Sigmoid colon (tissue), 7 donors: ENCODE measurements at regions of chrX and their contacts with region 1.

Region 1: GRCh38 chrX:24014388-24015018 is 12.5 kb downstream of the KLHL15 start:
- DNase-seq: no peak
- H3K4me3 ChIP-seq: no peak overlapping the region
- H3K27ac ChIP-seq: peak overlapping the region in 3 of 4 donors; percentile 8 to 45 (median 8)
- H3K4me1 ChIP-seq: peaks cover 0 to 1% (median 0%) of the 10 kb centered on the region in 4 donors
- H3K27me3 ChIP-seq: no peaks in the 10 kb centered on the region
- CTCF ChIP-seq: no peak
- EP300 ChIP-seq: no peak
- POLR2A ChIP-seq: no peak

Region 2: DNA sequence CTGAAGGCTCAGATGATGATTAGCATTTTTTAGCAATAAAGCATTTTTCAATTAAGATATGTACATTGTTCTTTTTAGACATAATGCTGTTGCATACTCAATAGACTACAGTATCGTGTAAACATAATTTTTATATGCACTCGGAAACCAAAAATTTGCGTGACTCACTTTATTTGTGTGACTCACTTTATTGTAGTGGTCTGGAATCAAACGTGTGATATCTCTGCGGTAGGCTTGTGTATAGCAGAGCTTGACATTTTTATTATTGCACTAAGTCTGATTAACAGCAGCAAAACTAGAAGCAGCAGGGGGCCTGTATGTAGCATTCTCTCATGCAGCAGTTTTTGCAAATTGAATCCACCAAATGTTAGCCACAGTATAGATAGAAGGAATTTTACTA is 466.3 kb before region 1 on chrX:
- intact Hi-C with region 1: no loop called
- DNase-seq: no peak
- H3K4me3 ChIP-seq: no peak overlapping the region
- H3K27ac ChIP-seq: no peak overlapping the region
- H3K4me1 ChIP-seq: no peaks in the 10 kb centered on the region
- H3K27me3 ChIP-seq: no peaks in the 10 kb centered on the region
- CTCF ChIP-seq: no peak
- EP300 ChIP-seq: no peak
- POLR2A ChIP-seq: no peak

Region 3: GRCh38 chrX:23952984-23953907 is 61.3 kb before region 1 on chrX:
- intact Hi-C with region 1: loop called (anchors 10 kb)
- DNase-seq: no peak
- H3K4me3 ChIP-seq: no peak overlapping the region
- H3K27ac ChIP-seq: no peak overlapping the region
- H3K4me1 ChIP-seq: no peaks in the 10 kb centered on the region
- H3K27me3 ChIP-seq: no peaks in the 10 kb centered on the region
- CTCF ChIP-seq: no peak
- EP300 ChIP-seq: no peak
- POLR2A ChIP-seq: no peak

Region 4: GRCh38 chrX:23980011-23980441 is 34.5 kb before region 1 on chrX:
- intact Hi-C with region 1: no loop called
- DNase-seq: no peak
- H3K4me3 ChIP-seq: no peak overlapping the region
- H3K27ac ChIP-seq: no peak overlapping the region
- H3K4me1 ChIP-seq: peaks cover 0 to 4% (median 0%) of the 10 kb centered on the region in 4 donors
- H3K27me3 ChIP-seq: no peaks in the 10 kb centered on the region
- CTCF ChIP-seq: no peak
- EP300 ChIP-seq: no peak
- POLR2A ChIP-seq: no peak

Region 5: GRCh38 chrX:24110069-24110468 is 95.6 kb after region 1 on chrX:
- intact Hi-C with region 1: no loop called
- DNase-seq: no peak
- H3K4me3 ChIP-seq: no peak overlapping the region
- H3K27ac ChIP-seq: peak overlapping the region in 1 of 4 donors; percentile 28
- H3K4me1 ChIP-seq: peaks cover 0 to 17% (median 0%) of the 10 kb centered on the region in 4 donors
- H3K27me3 ChIP-seq: no peaks in the 10 kb centered on the region
- CTCF ChIP-seq: no peak
- EP300 ChIP-seq: no peak
- POLR2A ChIP-seq: no peak